Caco-2 (cell line): ENCODE measurements at regions of chr1 and their contacts with region 1.

Region 1: GRCh38 chr1:224615861-224616755 is at the start of gene CNIH3:
- DNase-seq: peak; percentile 79 to 82
- H3K4me3 ChIP-seq: peak within 1 kb of the TSS; percentile 62
- H3K4me3 Mint-ChIP-seq: peak within 1 kb of the TSS; percentile 80
- H3K27ac Mint-ChIP-seq: no peak within 1 kb of the TSS
- H3K4me1 ChIP-seq: peaks cover 16% of the 10 kb centered on the region; the same call in 1 of the 2 replicates
- H3K4me1 Mint-ChIP-seq: peaks cover 7% of the 10 kb centered on the region
- H3K27me3 ChIP-seq: no peaks in the 10 kb centered on the region; the same call in none of the 2 replicates
- H3K27me3 Mint-ChIP-seq: peaks cover 7% of the 10 kb centered on the region
- CTCF ChIP-seq: no peak
- total RNA-seq, gene CNIH3: 1.3 and 2.2 TPM in 2 replicates

Region 2: DNA sequence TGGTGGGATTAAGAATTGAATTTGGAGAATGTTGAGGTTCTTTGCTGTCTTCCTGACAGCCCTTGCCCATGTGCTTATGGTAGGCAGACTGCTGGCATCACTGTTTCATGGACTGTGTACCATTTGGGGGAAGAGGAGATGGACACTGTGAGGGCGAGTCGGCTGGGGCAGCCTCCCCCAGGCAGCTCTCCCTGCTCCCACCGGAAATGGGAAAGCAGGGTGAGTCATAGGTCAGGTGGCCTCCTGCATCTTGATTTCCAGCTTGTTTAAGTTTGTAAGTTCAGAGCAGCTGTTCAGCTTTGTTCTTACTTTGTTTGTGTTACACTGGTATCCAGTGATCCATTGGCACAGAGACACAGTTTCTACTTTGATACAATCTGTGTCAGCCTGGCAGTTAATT is 87.2 kb before region 1 on chr1:
- CTCF ChIA-PET with region 1: no interaction called
- POLR2A ChIA-PET with region 1: no interaction called
- intact Hi-C with region 1: loop called (anchors 5 kb)
- DNase-seq: no peak
- H3K4me3 ChIP-seq: no peak overlapping the region
- H3K4me3 Mint-ChIP-seq: no peak overlapping the region
- H3K27ac Mint-ChIP-seq: no peak overlapping the region
- H3K4me1 ChIP-seq: no peaks in the 10 kb centered on the region
- H3K4me1 Mint-ChIP-seq: no peaks in the 10 kb centered on the region
- H3K27me3 ChIP-seq: no peaks in the 10 kb centered on the region; the same call in 1 of the 2 replicates
- H3K27me3 Mint-ChIP-seq: peaks cover 10% of the 10 kb centered on the region
- CTCF ChIP-seq: no peak

Region 3: GRCh38 chr1:224569276-224569675 is 46.8 kb before region 1 on chr1:
- CTCF ChIA-PET with region 1: no interaction called
- POLR2A ChIA-PET with region 1: no interaction called
- intact Hi-C with region 1: no loop called
- DNase-seq: no peak
- H3K4me3 ChIP-seq: no peak overlapping the region
- H3K4me3 Mint-ChIP-seq: no peak overlapping the region
- H3K27ac Mint-ChIP-seq: no peak overlapping the region
- H3K4me1 ChIP-seq: no peaks in the 10 kb centered on the region
- H3K4me1 Mint-ChIP-seq: peaks cover 8% of the 10 kb centered on the region
- H3K27me3 ChIP-seq: no peaks in the 10 kb centered on the region
- H3K27me3 Mint-ChIP-seq: peaks cover 6% of the 10 kb centered on the region
- CTCF ChIP-seq: no peak

Region 4: DNA sequence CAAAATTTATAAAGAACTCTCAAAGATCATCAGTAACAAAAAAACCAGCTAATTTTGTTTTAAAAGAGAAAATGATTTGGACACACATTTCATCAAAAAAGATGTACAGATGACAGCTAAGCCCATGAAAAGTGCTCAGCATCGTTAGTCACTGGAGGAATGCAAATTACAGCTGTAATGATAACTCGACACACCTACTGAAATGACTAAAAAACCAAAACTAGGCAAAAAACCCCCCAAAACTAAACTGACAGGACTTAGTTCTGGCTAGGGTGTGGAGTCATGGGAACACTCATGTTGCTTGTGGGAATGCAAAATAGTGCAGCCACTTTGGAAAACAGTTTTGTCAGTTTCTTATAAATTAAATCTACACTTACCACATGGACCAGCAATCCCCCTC is 59.5 kb after region 1 on chr1:
- CTCF ChIA-PET with region 1: no interaction called
- POLR2A ChIA-PET with region 1: no interaction called
- intact Hi-C with region 1: no loop called
- DNase-seq: no peak
- H3K4me3 ChIP-seq: no peak overlapping the region
- H3K4me3 Mint-ChIP-seq: no peak overlapping the region
- H3K27ac Mint-ChIP-seq: no peak overlapping the region
- H3K4me1 ChIP-seq: no peaks in the 10 kb centered on the region
- H3K4me1 Mint-ChIP-seq: no peaks in the 10 kb centered on the region
- H3K27me3 ChIP-seq: no peaks in the 10 kb centered on the region
- H3K27me3 Mint-ChIP-seq: no peaks in the 10 kb centered on the region
- CTCF ChIP-seq: no peak